SK-N-SH (cell line): ENCODE measurements at regions of chr3 and their contacts with region 1.

Region 1: GRCh38 chr3:68876112-68876713 is 56.1 kb downstream of the TAFA4 start:
- DNase-seq: peak; percentile 33
- H3K4me3 ChIP-seq: peak overlapping the region in 1 of 2 experiments; percentile 27; a peak in 1 of 4 replicates
- H3K27ac ChIP-seq: no peak overlapping the region
- H3K4me1 ChIP-seq: no peaks in the 10 kb centered on the region
- H3K27me3 ChIP-seq: no peaks in the 10 kb centered on the region
- CTCF ChIP-seq: peak; percentile 95
- EP300 ChIP-seq: no peak
- RAD21 ChIP-seq: peak; percentile 92

Region 2: DNA sequence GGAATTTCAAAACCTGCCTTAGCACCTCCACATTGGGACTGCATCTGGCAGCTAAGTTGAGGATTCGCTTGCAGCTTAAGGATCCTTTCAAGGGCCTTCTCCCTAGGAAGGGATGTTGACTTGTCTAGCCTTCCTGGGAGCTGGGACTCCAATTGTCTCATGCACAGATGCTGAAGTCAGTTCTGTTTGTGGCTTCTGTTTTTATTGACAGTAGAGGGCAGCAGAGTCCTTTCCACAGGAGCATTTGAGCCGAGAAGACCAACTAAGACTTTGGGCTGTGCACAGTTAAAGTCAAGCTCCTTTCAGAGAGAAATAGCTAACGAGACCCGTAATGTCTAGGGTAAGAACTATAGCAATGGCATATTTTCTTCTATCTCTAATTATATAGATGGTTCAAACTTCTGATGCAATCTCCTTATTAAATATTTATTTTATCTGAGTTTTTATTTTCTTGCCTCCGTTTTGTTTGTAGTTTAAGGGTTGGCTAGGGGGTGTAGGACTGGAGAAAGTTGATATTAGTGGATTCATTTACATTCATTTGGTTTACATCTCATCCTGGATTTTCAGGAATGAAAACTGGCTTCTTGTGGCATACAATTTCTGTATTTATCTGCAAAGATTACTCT is 1937.8 kb before region 1 on chr3:
- CTCF ChIA-PET with region 1: interaction called, 12 read pairs
- POLR2A ChIA-PET with region 1: no interaction called
- DNase-seq: peak; percentile 36
- H3K4me3 ChIP-seq: no peak overlapping the region
- H3K27ac ChIP-seq: no peak overlapping the region
- H3K4me1 ChIP-seq: no peaks in the 10 kb centered on the region
- H3K27me3 ChIP-seq: no peaks in the 10 kb centered on the region
- CTCF ChIP-seq: peak; percentile 74
- EP300 ChIP-seq: no peak
- RAD21 ChIP-seq: peak; percentile 80

Region 3: GRCh38 chr3:66971891-66972551 is 1904.2 kb before region 1 on chr3:
- CTCF ChIA-PET with region 1: interaction called, 10 read pairs
- POLR2A ChIA-PET with region 1: no interaction called
- DNase-seq: peak; percentile 69
- H3K4me3 ChIP-seq: peak overlapping the region; percentile 24 to 45
- H3K27ac ChIP-seq: no peak overlapping the region
- H3K4me1 ChIP-seq: no peaks in the 10 kb centered on the region; a peak in 1 of 4 replicates
- H3K27me3 ChIP-seq: peaks cover 9% of the 10 kb centered on the region; the same call in 1 of the 2 replicates
- CTCF ChIP-seq: peak; percentile 81
- EP300 ChIP-seq: no peak
- RAD21 ChIP-seq: peak; percentile 83

Region 4: DNA sequence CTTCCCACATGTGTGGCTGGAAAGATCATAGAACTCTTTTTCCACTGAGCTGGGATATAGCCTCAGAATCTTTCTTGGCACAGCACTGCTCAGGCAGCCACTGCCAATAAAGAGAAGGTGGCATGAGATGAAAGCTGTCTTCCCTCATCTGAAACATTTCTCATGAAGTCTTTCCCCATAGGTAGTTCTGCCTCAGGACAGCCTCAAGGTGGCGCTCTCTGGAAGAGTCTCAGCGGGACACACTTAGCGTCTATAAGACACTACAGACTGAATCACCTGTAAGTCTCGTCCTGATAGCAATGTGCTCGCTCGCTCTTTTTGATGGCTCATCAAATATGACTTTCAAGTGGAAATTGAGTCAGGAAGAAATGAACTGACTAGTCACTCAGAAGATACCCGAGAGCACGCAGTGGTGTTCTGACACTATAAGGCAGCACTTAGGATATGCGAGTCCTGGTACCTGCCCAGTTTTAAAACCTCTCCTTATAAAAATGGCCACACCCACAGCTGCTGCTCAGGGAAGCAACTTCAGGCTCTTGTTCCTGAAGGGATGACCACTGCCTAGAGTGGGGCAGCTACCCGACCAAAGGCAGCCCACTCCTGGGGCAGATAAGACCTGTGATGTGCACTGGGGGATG is 1491.3 kb before region 1 on chr3:
- CTCF ChIA-PET with region 1: interaction called, 11 read pairs
- POLR2A ChIA-PET with region 1: no interaction called
- DNase-seq: peak; percentile 42
- H3K4me3 ChIP-seq: no peak overlapping the region
- H3K27ac ChIP-seq: no peak overlapping the region
- H3K4me1 ChIP-seq: no peaks in the 10 kb centered on the region
- H3K27me3 ChIP-seq: no peaks in the 10 kb centered on the region
- CTCF ChIP-seq: peak; percentile 71
- EP300 ChIP-seq: no peak
- RAD21 ChIP-seq: peak; percentile 77

Region 5: DNA sequence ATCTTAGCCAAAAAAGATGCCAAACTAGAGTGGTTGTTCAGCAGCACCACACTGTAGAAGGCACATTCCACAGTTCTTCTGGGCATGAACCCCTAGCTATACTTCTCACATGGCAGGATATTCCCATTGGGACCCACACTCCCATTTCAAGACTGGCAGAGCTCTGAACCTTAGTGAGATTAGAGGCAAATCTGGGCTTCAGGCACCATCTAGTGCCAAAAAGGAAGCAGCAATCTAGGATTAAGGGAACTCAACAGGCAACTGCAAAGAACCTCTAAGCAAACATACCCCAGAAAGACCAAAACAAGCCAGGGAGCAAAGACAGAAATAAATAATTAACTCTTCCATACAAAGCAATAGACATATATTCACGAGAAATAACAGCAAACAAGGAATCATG is 10.1 kb before region 1 on chr3:
- CTCF ChIA-PET with region 1: interaction called, 11 read pairs
- POLR2A ChIA-PET with region 1: no interaction called
- DNase-seq: no peak
- H3K4me3 ChIP-seq: no peak overlapping the region
- H3K27ac ChIP-seq: no peak overlapping the region
- H3K4me1 ChIP-seq: no peaks in the 10 kb centered on the region
- H3K27me3 ChIP-seq: no peaks in the 10 kb centered on the region
- CTCF ChIP-seq: 0 out of 2 replicates have a peak, but pooled peaks have one; percentile 8
- EP300 ChIP-seq: no peak
- RAD21 ChIP-seq: 0 out of 2 replicates have a peak, but pooled peaks have one; percentile 21

Region 6: DNA sequence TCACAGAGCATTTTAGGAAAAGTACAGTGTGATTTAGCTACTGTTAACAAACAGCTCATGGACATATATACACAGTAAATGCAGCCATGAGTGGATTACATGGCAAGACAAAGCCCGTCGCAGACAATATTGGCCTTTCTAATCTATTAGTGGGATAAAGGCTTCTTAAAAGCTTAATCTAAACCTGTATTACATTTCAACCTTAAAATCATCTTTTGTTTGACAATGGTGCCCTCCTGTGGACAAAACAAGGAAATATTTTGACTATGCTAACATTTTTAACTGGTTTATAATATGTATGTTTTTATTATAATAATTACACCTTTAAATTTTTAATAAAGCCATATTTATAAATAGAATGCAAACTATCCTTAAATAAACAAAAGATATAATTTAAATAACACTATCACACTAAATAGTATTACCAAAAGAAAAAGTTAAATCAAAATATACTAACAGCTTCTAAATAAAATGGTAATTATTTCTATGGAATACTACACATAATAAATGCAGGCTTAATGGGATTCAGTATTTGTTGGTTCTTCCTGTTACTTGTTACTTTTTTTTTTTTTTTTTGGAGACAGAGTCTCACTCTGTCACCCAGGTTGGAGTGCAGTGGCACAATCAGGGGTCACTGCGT is 17.5 kb after region 1 on chr3:
- CTCF ChIA-PET with region 1: interaction called, 14 read pairs
- POLR2A ChIA-PET with region 1: no interaction called
- DNase-seq: peak; percentile 10
- H3K4me3 ChIP-seq: no peak overlapping the region
- H3K27ac ChIP-seq: no peak overlapping the region
- H3K4me1 ChIP-seq: no peaks in the 10 kb centered on the region; a peak in 2 of 4 replicates
- H3K27me3 ChIP-seq: no peaks in the 10 kb centered on the region
- CTCF ChIP-seq: peak; percentile 60
- EP300 ChIP-seq: no peak
- RAD21 ChIP-seq: peak; percentile 68

Region 7: DNA sequence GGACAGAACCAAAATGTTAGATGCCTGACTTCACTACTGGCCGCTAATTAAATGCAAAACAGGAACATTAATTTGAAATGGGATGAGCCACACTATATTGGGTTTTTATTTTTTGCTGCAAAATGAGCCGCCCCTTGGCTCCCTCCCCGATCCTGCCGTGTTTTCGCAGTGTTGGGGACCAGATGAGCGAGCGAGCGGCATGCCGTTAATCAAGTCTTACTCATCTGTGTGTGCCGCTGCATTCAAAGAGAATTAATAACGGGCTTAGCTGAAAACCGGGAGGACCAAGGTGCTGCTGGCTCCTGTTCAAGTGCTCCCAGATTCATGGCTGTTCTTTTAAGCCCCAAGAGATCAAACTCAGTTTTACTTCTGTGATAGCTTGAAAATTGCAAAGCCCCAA is 36.2 kb after region 1 on chr3:
- CTCF ChIA-PET with region 1: no interaction called
- POLR2A ChIA-PET with region 1: no interaction called
- DNase-seq: no peak
- H3K4me3 ChIP-seq: no peak overlapping the region
- H3K27ac ChIP-seq: no peak overlapping the region
- H3K4me1 ChIP-seq: no peaks in the 10 kb centered on the region; a peak in 1 of 4 replicates
- H3K27me3 ChIP-seq: 0 out of 2 replicates have a peak, but pooled peaks cover 4% of the 10 kb centered on the region
- CTCF ChIP-seq: no peak
- EP300 ChIP-seq: no peak
- RAD21 ChIP-seq: no peak

Region 8: GRCh38 chr3:68972358-68972979 is 96.3 kb after region 1 on chr3:
- CTCF ChIA-PET with region 1: interaction called, 22 read pairs
- POLR2A ChIA-PET with region 1: no interaction called
- DNase-seq: peak; percentile 64
- H3K4me3 ChIP-seq: no peak overlapping the region; a peak in 1 of 4 replicates
- H3K27ac ChIP-seq: no peak overlapping the region
- H3K4me1 ChIP-seq: no peaks in the 10 kb centered on the region
- H3K27me3 ChIP-seq: peaks cover 18% of the 10 kb centered on the region; the same call in 1 of the 2 replicates
- CTCF ChIP-seq: peak; percentile 87
- EP300 ChIP-seq: no peak
- RAD21 ChIP-seq: peak; percentile 96

Region 9: DNA sequence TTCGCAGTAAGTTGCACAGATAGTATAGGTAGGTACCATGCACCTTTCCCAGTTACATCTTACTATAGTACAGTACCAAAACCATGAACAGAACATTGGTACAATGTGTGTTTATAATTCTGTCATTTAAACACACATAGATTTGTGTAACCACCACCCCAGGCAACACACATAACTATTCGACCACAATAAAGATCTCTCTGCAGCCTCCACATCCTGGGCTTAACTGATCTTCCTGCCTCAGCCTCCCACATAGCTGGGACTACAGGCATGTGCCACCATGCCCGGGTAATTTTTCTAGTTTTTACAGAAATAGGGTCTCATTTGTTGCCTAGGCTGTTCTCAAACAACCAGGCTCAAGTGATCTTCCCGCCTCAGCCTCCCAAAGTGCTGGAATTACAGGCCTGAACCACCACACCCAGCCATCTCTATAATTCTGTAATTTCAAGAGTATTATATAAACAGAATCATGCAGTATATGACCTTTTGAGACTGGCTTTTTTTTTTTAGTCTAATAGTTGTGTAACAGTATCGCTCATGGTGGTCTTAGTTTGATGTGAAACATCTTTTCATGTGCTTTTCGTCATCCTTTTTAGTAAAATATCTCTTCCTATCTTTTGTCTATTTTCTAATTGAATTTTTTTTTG is 189.2 kb after region 1 on chr3:
- CTCF ChIA-PET with region 1: no interaction called
- POLR2A ChIA-PET with region 1: no interaction called
- DNase-seq: no peak
- H3K4me3 ChIP-seq: no peak overlapping the region
- H3K27ac ChIP-seq: no peak overlapping the region
- H3K4me1 ChIP-seq: no peaks in the 10 kb centered on the region; a peak in 1 of 4 replicates
- H3K27me3 ChIP-seq: no peaks in the 10 kb centered on the region
- CTCF ChIP-seq: no peak
- EP300 ChIP-seq: no peak
- RAD21 ChIP-seq: no peak

Region 10: GRCh38 chr3:69116897-69117296 is 240.7 kb after region 1 on chr3:
- CTCF ChIA-PET with region 1: no interaction called
- POLR2A ChIA-PET with region 1: no interaction called
- DNase-seq: no peak
- H3K4me3 ChIP-seq: no peak overlapping the region
- H3K27ac ChIP-seq: no peak overlapping the region
- H3K4me1 ChIP-seq: no peaks in the 10 kb centered on the region; a peak in 1 of 4 replicates
- H3K27me3 ChIP-seq: no peaks in the 10 kb centered on the region
- CTCF ChIP-seq: no peak
- EP300 ChIP-seq: no peak
- RAD21 ChIP-seq: no peak